CD4-positive, alpha-beta memory T cell (primary cell): ENCODE measurements at regions of chr3 and their contacts with region 1.

Region 1: DNA sequence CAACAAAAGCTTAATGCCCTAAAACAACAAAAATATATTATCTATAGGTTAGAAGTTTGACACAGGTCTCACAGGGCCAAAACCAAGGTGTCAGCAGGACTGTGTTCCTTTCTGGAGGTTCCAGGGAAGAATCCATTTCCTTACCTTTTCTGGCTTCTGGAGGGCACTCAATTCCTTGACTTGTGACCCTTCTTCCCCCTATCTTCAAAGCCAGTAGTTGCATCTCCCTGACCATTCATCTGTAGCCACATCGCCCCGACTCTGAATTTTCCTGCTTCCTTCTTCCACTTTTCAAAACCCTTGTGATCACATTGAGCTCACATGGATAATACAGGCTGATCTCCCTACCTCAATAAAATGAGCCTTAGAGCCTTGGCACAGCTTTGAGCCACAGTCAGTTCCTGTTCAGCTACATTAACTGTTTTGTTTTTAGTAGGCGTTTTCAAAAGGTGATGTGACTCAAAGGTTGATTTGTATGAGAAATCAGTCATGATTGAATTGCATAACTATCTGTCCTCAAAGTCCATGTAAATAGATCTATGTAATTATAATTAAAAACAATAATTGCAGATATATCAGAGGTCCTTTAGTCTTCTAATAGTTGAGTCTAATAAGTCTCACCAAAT is 12.4 kb downstream of the PFN2 start:
- DNase-seq: no peak
- H3K4me3 ChIP-seq: no peak overlapping the region
- H3K4me3 Mint-ChIP-seq: no peak overlapping the region
- H3K27ac ChIP-seq: no peak overlapping the region
- H3K27ac Mint-ChIP-seq: peak overlapping the region in 3 of 7 donors; percentile 1 to 5 (median 2)
- H3K4me1 ChIP-seq: peaks cover 16% of the 10 kb centered on the region
- H3K4me1 Mint-ChIP-seq: peaks cover 16 to 27% (median 17%) of the 10 kb centered on the region in 4 donors
- H3K27me3 ChIP-seq: no peaks in the 10 kb centered on the region
- H3K27me3 Mint-ChIP-seq: no peaks in the 10 kb centered on the region

Region 2: DNA sequence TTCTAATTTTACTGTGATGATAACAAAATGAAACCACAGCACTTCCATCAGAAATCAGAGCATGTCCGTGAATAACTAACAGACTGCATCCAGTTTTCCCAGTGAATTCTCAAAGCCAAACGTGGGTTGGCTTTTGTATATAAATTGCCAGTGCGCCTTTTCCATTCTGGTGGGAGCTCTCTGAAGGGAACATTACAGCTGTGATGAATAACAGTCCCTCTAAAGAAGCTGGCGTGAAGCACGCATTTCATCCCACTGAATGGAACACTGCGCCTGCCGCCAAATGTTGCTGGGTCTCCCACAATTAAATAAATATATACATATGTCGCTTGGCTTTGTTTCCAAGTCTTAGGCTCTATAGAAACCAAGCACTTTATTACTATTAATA is 125.4 kb after region 1 on chr3:
- CTCF ChIA-PET with region 1: no interaction called
- POLR2A ChIA-PET with region 1: no interaction called
- intact Hi-C with region 1: loop called (anchors 5 kb)
- DNase-seq: no peak
- H3K4me3 ChIP-seq: no peak overlapping the region
- H3K4me3 Mint-ChIP-seq: no peak overlapping the region
- H3K27ac ChIP-seq: no peak overlapping the region
- H3K27ac Mint-ChIP-seq: no peak overlapping the region
- H3K4me1 ChIP-seq: no peaks in the 10 kb centered on the region
- H3K4me1 Mint-ChIP-seq: no peaks in the 10 kb centered on the region
- H3K27me3 ChIP-seq: no peaks in the 10 kb centered on the region
- H3K27me3 Mint-ChIP-seq: peaks cover 5 to 7% of the 10 kb centered on the region in 2 donors